OCI-LY7 (cell line): ENCODE measurements at regions of chr17 and their contacts with region 1.

Region 1: DNA sequence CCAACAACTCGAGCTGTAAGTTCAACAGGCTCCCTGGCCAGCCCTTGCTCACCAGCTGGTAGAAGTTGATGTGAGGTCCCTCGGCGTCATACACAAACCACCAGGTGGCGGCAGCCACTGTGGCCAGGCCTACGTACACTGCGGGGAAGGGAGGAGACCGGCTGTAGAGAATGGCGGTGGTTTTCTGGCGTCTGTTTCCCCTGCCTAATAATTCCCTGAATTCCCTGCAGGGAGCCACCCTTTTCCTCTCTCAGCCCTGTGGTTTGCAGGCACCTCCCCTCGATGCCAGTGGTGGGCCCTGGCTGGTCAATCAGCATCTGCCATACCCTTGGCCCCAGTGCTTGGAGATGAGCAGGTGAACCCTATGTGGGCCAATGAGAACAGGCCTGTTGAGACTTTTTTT is 18.9 kb upstream of the P2RX1 start:
- DNase-seq: peak; percentile 71
- H3K4me3 ChIP-seq: no peak overlapping the region
- H3K27ac ChIP-seq: no peak overlapping the region
- H3K4me1 ChIP-seq: no peaks in the 10 kb centered on the region
- CTCF ChIP-seq: peak; percentile 73

Region 2: GRCh38 chr17:3913531-3914311 is 21.4 kb before region 1 on chr17:
- CTCF ChIA-PET with region 1: no interaction called
- POLR2A ChIA-PET with region 1: no interaction called
- intact Hi-C with region 1: no loop called
- DNase-seq: peak; percentile 88
- H3K4me3 ChIP-seq: peak overlapping the region; percentile 44
- H3K27ac ChIP-seq: peak overlapping the region; percentile 68
- H3K4me1 ChIP-seq: peaks cover 58% of the 10 kb centered on the region
- CTCF ChIP-seq: peak; percentile 99

Region 3: DNA sequence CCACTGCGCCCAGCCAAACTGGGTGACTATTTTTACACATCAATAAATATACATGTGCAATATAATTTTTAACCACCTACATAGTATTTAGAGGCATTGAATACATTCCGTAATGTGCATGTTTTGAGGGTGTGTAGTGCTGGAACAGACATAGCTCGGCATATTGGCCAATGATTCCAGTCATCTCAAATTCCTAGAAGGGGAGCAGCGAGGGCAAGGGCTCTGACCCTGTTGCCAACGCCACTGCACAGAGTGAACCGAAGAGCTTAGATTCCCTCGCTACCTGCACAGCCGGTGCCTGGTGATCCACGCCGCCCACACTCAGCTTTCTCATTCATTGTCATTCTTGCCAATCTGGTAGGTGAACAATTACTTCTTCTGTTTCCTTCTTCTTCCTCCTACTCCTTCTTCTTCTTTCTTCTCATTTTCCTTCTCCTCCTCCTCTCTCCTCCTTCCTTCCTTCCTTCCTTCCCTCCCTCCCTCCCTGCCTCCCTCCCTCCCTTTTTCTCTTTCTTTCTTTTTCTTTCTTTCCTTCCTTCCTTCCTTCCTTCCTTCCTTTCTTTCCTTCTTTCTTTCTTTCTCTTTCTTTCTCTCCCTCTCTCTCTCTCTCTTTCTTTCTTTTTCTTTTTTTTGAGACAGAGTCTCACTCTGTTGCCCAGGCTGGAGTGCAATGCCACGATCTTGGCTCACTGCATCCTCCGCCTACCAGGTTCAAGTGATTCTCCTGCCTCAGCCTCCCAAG is 55.4 kb after region 1 on chr17:
- CTCF ChIA-PET with region 1: no interaction called
- POLR2A ChIA-PET with region 1: no interaction called
- intact Hi-C with region 1: no loop called
- DNase-seq: no peak
- H3K4me3 ChIP-seq: no peak overlapping the region
- H3K27ac ChIP-seq: no peak overlapping the region
- H3K4me1 ChIP-seq: peaks cover 19% of the 10 kb centered on the region
- CTCF ChIP-seq: no peak

Region 4: DNA sequence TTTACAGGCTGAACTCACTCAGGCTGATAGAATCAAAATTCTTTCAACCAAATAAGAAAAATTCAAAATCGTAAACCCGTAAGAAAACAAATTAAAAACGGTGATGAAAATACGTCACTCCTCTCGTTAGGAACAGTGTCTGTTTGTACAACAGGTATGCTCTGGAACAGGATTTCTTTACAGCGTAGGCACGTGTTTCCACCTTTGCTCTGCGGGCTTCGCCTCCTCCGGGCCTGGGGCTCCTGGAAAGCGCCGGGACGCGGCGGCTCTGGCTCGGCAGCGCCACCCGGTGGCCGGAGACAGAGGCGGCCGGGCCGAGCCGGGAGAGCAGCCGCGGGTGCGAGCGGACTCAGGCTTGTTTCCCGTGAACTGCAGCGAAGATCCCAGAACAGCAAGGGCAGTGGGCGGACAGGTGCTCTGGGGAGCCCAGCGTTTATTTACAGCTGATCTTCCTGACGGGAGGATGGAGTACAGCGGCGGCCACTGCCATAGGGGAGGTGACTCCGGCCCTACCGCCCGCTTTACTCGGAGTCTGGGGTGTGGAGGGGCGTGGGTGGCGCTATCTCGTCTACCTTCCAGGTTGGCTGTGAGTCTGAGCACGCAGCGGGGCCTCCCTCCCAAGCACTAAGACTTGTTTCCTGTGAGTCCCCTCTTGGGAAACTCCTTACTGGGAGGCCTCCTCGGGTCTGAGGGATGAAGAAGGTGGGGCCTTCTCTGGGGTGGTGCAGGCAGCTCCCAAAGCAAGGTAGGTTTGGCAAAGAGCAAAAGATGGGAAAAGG is 69.6 kb after region 1 on chr17:
- CTCF ChIA-PET with region 1: no interaction called
- POLR2A ChIA-PET with region 1: no interaction called
- intact Hi-C with region 1: loop called (anchors 1 kb)
- DNase-seq: peak; percentile 72
- H3K4me3 ChIP-seq: no peak overlapping the region
- H3K27ac ChIP-seq: no peak overlapping the region
- H3K4me1 ChIP-seq: peaks cover 13% of the 10 kb centered on the region
- CTCF ChIP-seq: peak; percentile 96

Region 5: DNA sequence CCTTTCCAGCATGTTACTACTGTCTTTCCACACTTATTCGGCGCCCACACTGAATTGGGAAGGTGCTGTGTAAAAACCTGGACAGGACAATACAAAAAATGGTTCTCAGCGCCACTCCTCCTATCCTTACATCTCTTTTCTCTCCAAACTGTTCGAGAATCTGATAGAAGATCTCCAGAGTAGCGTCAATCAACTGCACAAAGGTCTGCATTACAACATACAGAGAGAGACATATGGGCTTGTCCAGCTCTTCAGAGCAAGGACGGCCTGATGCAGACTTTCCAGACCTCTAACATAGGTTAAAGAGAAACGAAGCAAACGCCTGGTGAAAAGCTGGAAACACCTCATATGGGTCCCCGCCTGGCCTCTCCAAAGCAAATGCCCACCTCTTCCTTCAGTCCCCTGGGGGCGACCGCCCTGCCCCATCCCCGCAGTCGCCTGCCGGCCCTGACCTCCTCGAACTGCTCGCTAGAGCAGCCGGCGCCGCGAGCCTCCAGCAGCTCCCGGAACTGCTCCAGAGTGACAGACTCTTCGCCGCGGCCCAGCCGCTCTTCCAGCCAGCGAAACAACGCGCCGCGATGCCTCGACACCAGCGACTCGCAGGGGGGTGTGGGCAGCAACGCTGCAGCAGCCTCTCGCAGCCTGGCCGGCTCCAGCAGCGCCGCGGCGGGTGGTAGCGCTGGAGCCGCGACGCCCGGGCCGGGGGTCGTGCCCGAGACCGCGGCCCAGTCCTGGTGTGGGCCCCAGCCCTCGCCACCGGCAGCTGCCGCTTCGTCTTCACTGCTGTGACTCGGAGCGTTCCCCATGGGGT is 207.2 kb after region 1 on chr17:
- CTCF ChIA-PET with region 1: no interaction called
- POLR2A ChIA-PET with region 1: no interaction called
- intact Hi-C with region 1: no loop called
- DNase-seq: peak; percentile 48
- H3K4me3 ChIP-seq: peak overlapping the region; percentile 88
- H3K27ac ChIP-seq: peak overlapping the region; percentile 3
- H3K4me1 ChIP-seq: peaks cover 23% of the 10 kb centered on the region
- CTCF ChIP-seq: no peak